MCF 10A (cell line): ENCODE measurements at regions of chr12 and their contacts with region 1.

Region 1: DNA sequence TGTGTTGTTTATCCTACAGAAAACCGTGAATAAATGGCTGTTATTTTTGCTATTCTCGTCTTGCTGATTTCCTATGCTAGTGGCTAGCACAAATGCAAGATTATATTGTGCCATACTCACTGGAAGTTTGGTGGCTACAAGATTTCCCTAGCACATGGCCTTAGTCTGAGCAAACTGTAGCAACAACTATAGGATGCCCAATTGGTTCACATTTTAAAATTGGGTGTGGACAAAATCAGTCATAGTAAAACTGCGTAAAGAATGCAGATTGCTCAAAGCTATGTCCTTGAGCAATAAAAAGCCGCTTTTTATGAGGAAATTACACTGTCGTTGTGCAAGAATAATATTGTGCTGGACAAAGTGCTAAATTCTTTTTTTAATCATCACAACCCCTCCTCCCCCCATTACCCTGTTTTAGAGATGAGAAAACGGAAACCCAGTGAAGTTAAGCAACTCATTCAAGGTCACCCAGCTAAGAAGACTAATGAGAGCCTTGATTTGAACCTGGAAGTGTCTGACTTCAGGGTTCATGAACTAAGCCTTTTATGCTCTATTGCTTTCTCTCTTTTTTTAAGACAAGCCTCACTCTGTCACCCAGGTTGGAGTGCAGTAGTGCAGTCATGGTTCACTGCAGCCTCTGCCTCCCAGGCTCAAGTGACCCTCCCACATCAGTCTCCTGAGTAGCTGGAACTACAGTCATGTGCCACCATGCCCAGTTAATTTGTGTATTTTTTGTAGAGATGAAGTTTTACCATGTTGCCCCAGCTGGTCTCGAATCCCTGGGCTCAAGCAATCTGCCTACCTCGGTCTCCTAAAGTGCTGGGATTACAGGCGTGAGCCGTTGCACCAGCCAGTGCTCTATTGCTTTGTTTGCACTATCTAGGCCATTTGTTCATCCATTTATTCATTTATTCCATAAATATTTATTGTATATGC is 73.6 kb downstream of the SRGAP1 start:
- DNase-seq: peak; percentile 97
- H3K4me3 Mint-ChIP-seq: peak overlapping the region; percentile 0
- H3K27ac Mint-ChIP-seq: peak overlapping the region; percentile 89
- H3K4me1 Mint-ChIP-seq: peaks cover 80% of the 10 kb centered on the region
- H3K27me3 Mint-ChIP-seq: no peaks in the 10 kb centered on the region
- CTCF ChIP-seq: no peak

Region 2: GRCh38 chr12:63521706-63522105 is 396.4 kb before region 1 on chr12:
- CTCF ChIA-PET with region 1: no interaction called
- POLR2A ChIA-PET with region 1: no interaction called
- intact Hi-C with region 1: no loop called
- DNase-seq: no peak
- H3K4me3 Mint-ChIP-seq: no peak overlapping the region
- H3K27ac Mint-ChIP-seq: no peak overlapping the region
- H3K4me1 Mint-ChIP-seq: no peaks in the 10 kb centered on the region
- H3K27me3 Mint-ChIP-seq: peaks cover 34% of the 10 kb centered on the region
- CTCF ChIP-seq: no peak

Region 3: DNA sequence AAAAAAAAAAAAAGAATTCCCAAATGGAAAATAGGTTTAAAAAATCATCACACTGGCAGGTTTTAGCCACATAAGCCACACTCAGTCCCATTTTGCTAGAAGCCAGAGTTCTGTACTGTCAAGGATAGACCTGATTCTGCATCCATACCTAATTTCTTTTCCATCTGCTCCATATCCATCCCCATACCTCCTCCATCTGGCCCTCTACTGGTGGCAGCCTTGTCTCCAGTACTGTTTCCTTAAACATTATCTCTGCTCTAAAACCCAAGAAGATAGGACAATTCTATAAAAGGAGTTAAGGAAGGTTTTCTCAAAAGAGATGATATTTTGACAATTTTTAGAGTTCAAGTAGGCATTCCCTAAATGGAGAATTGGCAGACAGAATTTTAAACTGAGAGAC is 164.4 kb before region 1 on chr12:
- CTCF ChIA-PET with region 1: no interaction called
- POLR2A ChIA-PET with region 1: no interaction called
- intact Hi-C with region 1: no loop called
- DNase-seq: peak; percentile 16
- H3K4me3 Mint-ChIP-seq: no peak overlapping the region
- H3K27ac Mint-ChIP-seq: no peak overlapping the region
- H3K4me1 Mint-ChIP-seq: no peaks in the 10 kb centered on the region
- H3K27me3 Mint-ChIP-seq: peaks cover 80% of the 10 kb centered on the region
- CTCF ChIP-seq: peak; percentile 13

Region 4: GRCh38 chr12:63897931-63898330 is 20.2 kb before region 1 on chr12:
- CTCF ChIA-PET with region 1: interaction called, 4 read pairs
- POLR2A ChIA-PET with region 1: interaction called, 15 read pairs
- intact Hi-C with region 1: no loop called
- DNase-seq: no peak
- H3K4me3 Mint-ChIP-seq: no peak overlapping the region
- H3K27ac Mint-ChIP-seq: peak overlapping the region; percentile 68
- H3K4me1 Mint-ChIP-seq: peaks cover 15% of the 10 kb centered on the region
- H3K27me3 Mint-ChIP-seq: no peaks in the 10 kb centered on the region
- CTCF ChIP-seq: no peak

Region 5: DNA sequence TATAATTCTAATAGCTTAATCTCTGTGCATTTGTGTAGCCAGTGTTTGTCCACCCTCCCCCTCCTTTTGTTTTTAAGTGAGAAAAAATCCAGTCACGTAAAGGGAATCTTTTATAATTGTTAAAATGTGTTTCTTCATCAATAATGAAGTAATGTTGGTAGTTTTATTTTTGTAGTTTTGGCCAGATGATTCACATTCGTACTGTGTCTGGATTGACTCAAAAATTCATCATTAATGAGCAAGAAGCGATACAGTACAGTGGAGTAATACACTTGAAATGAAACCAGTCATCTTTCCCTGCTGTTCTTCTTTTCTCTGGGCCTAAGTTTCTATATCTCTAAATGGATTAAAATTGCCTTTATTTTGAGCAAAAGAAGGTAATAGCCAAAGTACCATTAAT is 12.8 kb after region 1 on chr12:
- CTCF ChIA-PET with region 1: interaction called, 5 read pairs
- POLR2A ChIA-PET with region 1: interaction called, 45 read pairs
- intact Hi-C with region 1: loop called (anchors 1 kb)
- DNase-seq: peak; percentile 51
- H3K4me3 Mint-ChIP-seq: peak overlapping the region; percentile 15
- H3K27ac Mint-ChIP-seq: peak overlapping the region; percentile 57
- H3K4me1 Mint-ChIP-seq: peaks cover 45% of the 10 kb centered on the region
- H3K27me3 Mint-ChIP-seq: no peaks in the 10 kb centered on the region
- CTCF ChIP-seq: no peak

Region 6: DNA sequence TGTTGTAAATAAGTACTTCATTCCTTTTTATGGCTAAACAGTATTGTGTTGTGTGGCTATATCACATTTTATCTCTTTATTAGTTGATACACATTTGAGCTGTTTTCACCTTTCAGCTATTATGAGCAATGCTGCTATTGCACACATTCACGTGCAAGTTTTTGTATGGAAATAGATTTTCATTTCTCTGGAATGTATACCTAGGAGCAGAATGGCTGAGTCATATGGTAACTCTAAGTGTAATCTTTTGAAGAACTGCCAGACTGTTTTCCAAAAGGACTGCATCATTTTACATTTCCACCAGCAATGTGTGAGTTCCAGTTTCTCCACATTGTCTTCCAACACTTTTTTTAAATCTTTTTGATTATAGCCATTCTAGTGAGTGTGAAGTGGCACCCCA is 60.4 kb after region 1 on chr12:
- CTCF ChIA-PET with region 1: no interaction called
- POLR2A ChIA-PET with region 1: interaction called, 8 read pairs
- intact Hi-C with region 1: loop called (anchors 1 kb)
- DNase-seq: peak; percentile 87
- H3K4me3 Mint-ChIP-seq: no peak overlapping the region
- H3K27ac Mint-ChIP-seq: peak overlapping the region; percentile 75
- H3K4me1 Mint-ChIP-seq: peaks cover 17% of the 10 kb centered on the region
- H3K27me3 Mint-ChIP-seq: no peaks in the 10 kb centered on the region
- CTCF ChIP-seq: no peak

Region 7: DNA sequence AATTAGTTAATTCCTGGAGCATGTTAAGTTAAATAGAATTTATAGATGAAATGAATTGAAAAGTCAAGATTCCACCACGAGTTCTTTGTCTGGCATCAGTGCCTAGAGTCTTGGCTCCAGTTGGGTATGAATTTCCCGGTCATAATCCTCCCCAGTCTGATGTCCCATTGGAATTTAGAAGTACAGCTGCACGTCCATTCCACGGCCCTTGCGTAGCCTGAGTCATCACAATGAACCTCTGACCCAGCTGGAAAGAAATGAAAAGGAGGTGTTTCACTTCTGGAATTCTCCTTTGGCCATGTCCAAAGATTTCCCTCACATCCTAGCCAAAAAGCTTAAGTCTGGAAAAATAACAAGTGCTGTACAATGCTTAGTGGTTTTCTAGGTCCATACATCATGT is 181.3 kb after region 1 on chr12:
- CTCF ChIA-PET with region 1: no interaction called
- POLR2A ChIA-PET with region 1: interaction called, 23 read pairs
- intact Hi-C with region 1: loop called (anchors 1 kb)
- DNase-seq: peak; percentile 85
- H3K4me3 Mint-ChIP-seq: no peak overlapping the region
- H3K27ac Mint-ChIP-seq: peak overlapping the region; percentile 54
- H3K4me1 Mint-ChIP-seq: peaks cover 34% of the 10 kb centered on the region
- H3K27me3 Mint-ChIP-seq: no peaks in the 10 kb centered on the region
- CTCF ChIP-seq: no peak